K562 (cell line): ENCODE measurements at regions of chr11 and their contacts with region 1.

Region 1: GRCh38 chr11:62621567-62622470 is at the start of gene B3GAT3:
- DNase-seq: peak; percentile 97 to 99 (median 98)
- ATAC-seq: peak; percentile 98
- H3K4me3 ChIP-seq: peak within 1 kb of the TSS; percentile 73
- H3K27ac ChIP-seq: peak within 1 kb of the TSS; percentile 84
- H3K4me1 ChIP-seq: peaks cover 12 to 13% of the 10 kb centered on the region in 2 experiments; a peak in 4 of 5 replicates
- H3K27me3 ChIP-seq: no peaks in the 10 kb centered on the region
- CTCF ChIP-seq: peak in 2 of 3 experiments; percentile 8 to 28; a peak in 1 of 6 replicates
- EP300 ChIP-seq: no peak; the same call in 1 of the 2 replicates
- POLR2A ChIP-seq: peak; percentile 79
- RAD21 ChIP-seq: no peak
- polyA plus RNA-seq, gene B3GAT3: 0.30 to 3.3 TPM

Region 2: DNA sequence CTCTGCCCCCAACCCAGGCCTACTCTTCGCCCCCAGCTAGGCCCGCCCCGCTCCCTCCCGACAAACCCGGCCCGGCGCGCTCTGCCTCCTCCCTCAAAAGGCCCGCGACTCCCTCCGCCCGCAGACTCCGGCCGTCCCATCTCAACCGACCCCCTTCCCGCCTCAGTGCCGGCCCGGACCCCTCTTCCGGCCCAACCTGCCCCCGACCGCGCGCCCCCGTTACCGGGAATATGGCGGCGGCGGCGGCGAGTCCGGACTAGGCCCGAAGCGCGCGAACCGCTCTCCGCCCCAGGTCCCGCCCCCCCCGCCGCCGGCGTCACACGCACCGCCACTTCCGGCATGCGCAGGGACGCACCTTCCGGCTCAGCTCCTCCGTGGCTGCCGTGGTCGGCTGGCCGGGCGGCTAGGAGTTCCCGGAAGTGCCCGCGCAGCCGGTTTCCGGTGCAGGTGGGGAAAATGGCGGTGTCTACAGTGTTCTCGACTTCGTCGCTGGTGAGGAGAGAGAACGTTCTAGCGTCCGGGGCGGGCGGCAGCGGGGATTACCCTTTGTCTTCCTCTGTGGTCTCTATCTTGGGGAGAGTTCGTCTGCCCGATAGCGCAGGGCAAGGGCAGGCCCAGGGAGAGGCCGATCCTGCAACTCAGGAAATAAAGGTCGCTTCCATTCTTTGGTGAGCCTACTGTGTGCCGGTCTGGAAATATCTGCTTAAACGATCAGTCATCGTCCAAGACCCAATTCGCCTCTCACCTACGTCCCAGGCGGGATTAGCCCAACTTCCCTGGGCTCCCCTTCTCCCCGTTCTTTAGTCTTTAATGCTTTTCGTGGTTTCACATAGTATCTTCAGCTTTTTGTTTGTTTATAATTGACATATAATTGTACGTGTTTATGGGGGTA is 1191.9 kb before region 1 on chr11 and contains the starts of genes CPSF7 and SDHAF2:
- CTCF ChIA-PET with region 1: no interaction called
- POLR2A ChIA-PET with region 1: no interaction called
- in situ Hi-C with region 1: loop called (anchors 10 kb)
- intact Hi-C with region 1: no loop called
- DNase-seq: peak; percentile 89 to 98 (median 92)
- ATAC-seq: peak; percentile 91
- H3K4me3 ChIP-seq: peak within 1 kb of the TSS; percentile 72
- H3K27ac ChIP-seq: peak within 1 kb of the TSS; percentile 98
- H3K4me1 ChIP-seq: peaks cover 4 to 7% of the 10 kb centered on the region in 2 experiments; a peak in 3 of 5 replicates
- H3K27me3 ChIP-seq: no peaks in the 10 kb centered on the region
- CTCF ChIP-seq: no peak
- EP300 ChIP-seq: no peak
- POLR2A ChIP-seq: peak; percentile 93
- RAD21 ChIP-seq: no peak
- polyA plus RNA-seq, gene CPSF7: 14.8 to 46.8 TPM
- polyA plus RNA-seq, gene SDHAF2: 140 to 144 TPM

Region 3: GRCh38 chr11:62532096-62532495 is 89.7 kb before region 1 on chr11:
- CTCF ChIA-PET with region 1: no interaction called
- POLR2A ChIA-PET with region 1: no interaction called
- in situ Hi-C with region 1: no loop called
- intact Hi-C with region 1: no loop called
- DNase-seq: no peak
- ATAC-seq: no peak
- H3K4me3 ChIP-seq: no peak overlapping the region
- H3K27ac ChIP-seq: no peak overlapping the region
- H3K4me1 ChIP-seq: peaks cover 0 to 5% of the 10 kb centered on the region in 2 experiments; a peak in 1 of 5 replicates
- H3K27me3 ChIP-seq: no peaks in the 10 kb centered on the region
- CTCF ChIP-seq: no peak
- EP300 ChIP-seq: no peak
- POLR2A ChIP-seq: no peak
- RAD21 ChIP-seq: no peak

Region 4: DNA sequence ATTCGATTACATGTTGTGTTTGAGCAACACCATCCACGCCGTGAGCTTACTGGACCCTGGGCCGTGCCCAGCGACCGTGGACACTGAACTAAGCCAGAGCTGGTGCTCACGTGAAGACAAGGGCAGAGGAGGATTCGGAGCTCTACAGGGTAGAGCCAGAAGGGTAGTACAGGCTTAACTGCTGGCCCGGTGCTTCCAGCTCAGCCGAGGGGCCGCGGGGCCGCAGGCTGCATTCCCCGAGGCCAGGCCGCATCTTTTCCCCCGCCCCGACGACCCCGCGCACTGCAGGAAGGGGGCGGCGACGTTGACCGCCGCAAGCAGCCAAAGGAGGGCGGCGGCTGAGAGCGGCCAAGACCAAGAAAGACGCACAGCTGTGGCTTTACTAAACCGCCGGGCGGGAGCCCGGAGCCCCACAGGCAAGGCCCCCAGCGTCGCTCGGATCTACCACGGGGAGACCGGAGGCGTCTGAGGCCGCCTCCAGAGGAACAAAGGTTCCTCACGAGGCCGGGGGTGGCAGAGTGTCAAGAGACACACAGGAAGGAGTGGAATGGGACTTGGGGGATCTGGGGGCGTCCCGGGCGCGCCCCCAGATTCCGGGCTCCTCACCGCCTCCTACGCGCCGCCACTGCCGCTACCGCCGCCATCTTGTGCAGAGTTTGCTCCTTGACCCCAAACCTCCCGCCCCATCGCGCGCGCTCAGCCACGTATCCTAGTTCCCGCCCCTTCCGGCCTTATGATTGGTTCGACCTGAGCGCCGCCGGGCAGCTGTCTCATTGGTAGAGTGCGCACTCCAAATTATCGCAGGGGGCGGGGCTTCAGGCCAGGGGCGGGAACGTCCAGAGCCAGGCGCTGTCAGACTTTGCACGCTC is 24.4 kb after region 1 on chr11 and contains the start of gene GANAB:
- CTCF ChIA-PET with region 1: no interaction called
- POLR2A ChIA-PET with region 1: interaction called, 12 read pairs
- in situ Hi-C with region 1: no loop called
- intact Hi-C with region 1: no loop called
- DNase-seq: peak; percentile 97 to 100 (median 98)
- ATAC-seq: peak; percentile 98
- H3K4me3 ChIP-seq: peak within 1 kb of the TSS; percentile 97
- H3K27ac ChIP-seq: peak within 1 kb of the TSS; percentile 96
- H3K4me1 ChIP-seq: peaks cover 12 to 38% of the 10 kb centered on the region in 2 experiments
- H3K27me3 ChIP-seq: no peaks in the 10 kb centered on the region
- CTCF ChIP-seq: no peak
- EP300 ChIP-seq: peak; percentile 12; the same call in 1 of the 2 replicates
- POLR2A ChIP-seq: peak; percentile 94
- RAD21 ChIP-seq: no peak
- polyA plus RNA-seq, gene GANAB: 6.5 to 17.9 TPM

Region 5: DNA sequence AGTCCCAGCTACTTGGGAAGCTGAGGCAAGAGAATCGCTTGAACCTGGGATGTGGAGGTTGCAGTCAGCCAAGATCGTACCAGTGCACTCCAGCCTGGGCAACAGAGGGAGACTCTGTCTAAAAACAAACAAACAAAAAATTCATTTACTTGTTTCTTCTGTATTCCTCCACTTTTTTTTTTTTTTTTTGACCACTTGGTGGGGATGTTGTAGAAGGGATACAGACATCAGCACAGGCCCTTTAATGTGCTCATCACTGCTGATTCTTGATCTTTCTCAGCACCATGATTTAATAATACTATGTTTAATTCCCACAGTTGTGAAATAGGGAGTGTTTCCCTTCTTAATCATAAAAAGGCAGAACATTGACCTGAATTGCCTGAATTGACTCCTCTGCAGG is 111.0 kb after region 1 on chr11:
- CTCF ChIA-PET with region 1: no interaction called
- POLR2A ChIA-PET with region 1: no interaction called
- in situ Hi-C with region 1: no loop called
- intact Hi-C with region 1: no loop called
- DNase-seq: no peak
- ATAC-seq: peak; percentile 25; the same call in 1 of the 3 replicates
- H3K4me3 ChIP-seq: no peak overlapping the region
- H3K27ac ChIP-seq: no peak overlapping the region
- H3K4me1 ChIP-seq: peaks cover 4 to 6% of the 10 kb centered on the region in 2 experiments; a peak in 3 of 5 replicates
- H3K27me3 ChIP-seq: no peaks in the 10 kb centered on the region
- CTCF ChIP-seq: peak; percentile 22 to 57 (median 37); a peak in 3 of 6 replicates
- EP300 ChIP-seq: no peak
- POLR2A ChIP-seq: no peak
- RAD21 ChIP-seq: peak in 1 of 2 experiments; percentile 28; a peak in 2 of 4 replicates

Region 6: GRCh38 chr11:63179432-63180041 is 557.7 kb after region 1 on chr11:
- CTCF ChIA-PET with region 1: no interaction called
- POLR2A ChIA-PET with region 1: no interaction called
- in situ Hi-C with region 1: no loop called
- intact Hi-C with region 1: no loop called
- DNase-seq: no peak
- ATAC-seq: no peak
- H3K4me3 ChIP-seq: no peak overlapping the region
- H3K27ac ChIP-seq: no peak overlapping the region
- H3K4me1 ChIP-seq: no peaks in the 10 kb centered on the region
- H3K27me3 ChIP-seq: no peaks in the 10 kb centered on the region
- CTCF ChIP-seq: no peak
- EP300 ChIP-seq: no peak
- POLR2A ChIP-seq: no peak
- RAD21 ChIP-seq: no peak

Region 7: DNA sequence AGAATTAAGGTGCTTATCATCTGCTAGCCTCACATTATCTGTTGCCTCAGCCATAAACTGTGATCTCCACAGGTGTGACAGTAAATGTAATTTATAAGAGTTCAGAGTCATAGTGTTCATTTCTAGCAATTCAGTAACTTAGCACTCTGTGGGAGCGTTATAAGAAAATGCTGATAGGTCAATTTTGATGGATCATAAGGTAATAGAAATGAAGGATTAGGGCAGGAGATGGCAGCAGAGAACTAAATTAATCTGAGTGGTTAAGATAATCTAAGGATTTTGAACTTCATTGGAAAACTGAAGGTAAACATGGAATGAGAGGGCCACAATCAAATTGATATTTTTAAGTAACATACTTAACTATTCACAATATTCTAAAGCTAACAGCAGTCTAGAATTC is 721.3 kb after region 1 on chr11:
- CTCF ChIA-PET with region 1: no interaction called
- POLR2A ChIA-PET with region 1: no interaction called
- in situ Hi-C with region 1: no loop called
- intact Hi-C with region 1: no loop called
- DNase-seq: no peak
- ATAC-seq: no peak
- H3K4me3 ChIP-seq: no peak overlapping the region
- H3K27ac ChIP-seq: no peak overlapping the region
- H3K4me1 ChIP-seq: no peaks in the 10 kb centered on the region
- H3K27me3 ChIP-seq: no peaks in the 10 kb centered on the region
- CTCF ChIP-seq: no peak
- EP300 ChIP-seq: no peak
- POLR2A ChIP-seq: no peak
- RAD21 ChIP-seq: no peak